CD4-positive, alpha-beta memory T cell (primary cell): ENCODE measurements at regions of chr3 and their contacts with region 1.

Region 1: DNA sequence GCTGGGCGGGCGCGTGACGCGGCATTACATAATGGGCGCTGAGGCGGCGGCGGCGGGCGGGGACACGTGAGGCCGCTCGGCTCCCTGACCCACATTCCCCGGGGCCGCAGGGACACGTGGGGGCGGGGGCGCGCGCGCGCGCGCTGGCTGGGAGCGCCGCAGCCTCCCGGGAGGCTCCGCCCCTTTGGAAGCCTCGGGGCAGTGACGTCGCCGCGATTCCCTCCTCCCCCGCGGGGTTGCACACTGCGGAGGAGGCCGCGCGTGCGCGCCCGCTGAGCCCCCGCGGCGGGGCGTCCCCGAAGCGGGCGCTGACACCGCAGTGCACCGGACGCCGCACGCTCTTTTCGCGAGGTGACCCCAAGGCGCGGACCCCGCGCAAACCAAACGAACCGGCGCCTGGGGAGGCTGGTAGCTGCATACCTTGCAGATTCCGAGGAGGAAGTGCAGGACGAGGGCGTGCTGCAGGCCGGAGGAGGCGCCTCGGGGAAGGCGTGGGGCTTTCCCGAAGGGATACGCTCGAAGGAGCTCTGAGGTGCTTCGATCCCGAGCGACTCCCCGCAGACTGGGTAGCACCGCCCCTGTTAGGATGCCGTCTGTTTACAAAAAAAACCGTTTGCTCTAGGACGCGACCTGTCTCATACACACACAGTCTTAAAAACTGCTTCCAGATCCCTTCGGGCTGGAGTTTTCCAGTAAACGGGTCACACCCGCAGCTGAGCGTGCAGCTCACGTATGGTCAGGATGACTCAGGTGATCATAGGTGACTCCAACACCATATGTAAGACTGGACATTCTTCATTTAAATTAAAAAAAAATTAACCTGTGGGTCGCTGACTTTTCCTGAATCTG is 1.0 kb downstream of the NR1D2 start:
- DNase-seq: peak; percentile 97 to 98 (median 98)
- H3K4me3 ChIP-seq: peak overlapping the region; percentile 83 to 86
- H3K4me3 Mint-ChIP-seq: peak overlapping the region; percentile 85 to 95 (median 88)
- H3K27ac ChIP-seq: peak overlapping the region; percentile 94
- H3K27ac Mint-ChIP-seq: peak overlapping the region; percentile 93 to 96 (median 95)
- H3K4me1 ChIP-seq: peaks cover 53% of the 10 kb centered on the region
- H3K4me1 Mint-ChIP-seq: peaks cover 38 to 61% (median 46%) of the 10 kb centered on the region in 4 donors
- H3K27me3 ChIP-seq: no peaks in the 10 kb centered on the region
- H3K27me3 Mint-ChIP-seq: no peaks in the 10 kb centered on the region

Region 2: GRCh38 chr3:23805633-23806533 is 140.2 kb before region 1 on chr3 and contains the start of gene UBE2E1:
- CTCF ChIA-PET with region 1: no interaction called
- POLR2A ChIA-PET with region 1: no interaction called
- intact Hi-C with region 1: loop called (anchors 2 kb)
- DNase-seq: peak; percentile 73 to 89 (median 78)
- H3K4me3 ChIP-seq: peak within 1 kb of the TSS; percentile 58 to 66
- H3K4me3 Mint-ChIP-seq: peak within 1 kb of the TSS; percentile 90 to 97 (median 95)
- H3K27ac ChIP-seq: peak within 1 kb of the TSS; percentile 52
- H3K27ac Mint-ChIP-seq: peak within 1 kb of the TSS; percentile 90 to 98 (median 93)
- H3K4me1 ChIP-seq: peaks cover 41% of the 10 kb centered on the region
- H3K4me1 Mint-ChIP-seq: peaks cover 35 to 48% (median 41%) of the 10 kb centered on the region in 4 donors
- H3K27me3 ChIP-seq: no peaks in the 10 kb centered on the region
- H3K27me3 Mint-ChIP-seq: no peaks in the 10 kb centered on the region
- total RNA-seq, gene UBE2E1: 59.5 to 61.4 TPM

Region 3: GRCh38 chr3:23916886-23917678 is 29.0 kb before region 1 on chr3 and contains the starts of genes NKIRAS1 and RPL15:
- CTCF ChIA-PET with region 1: interaction called, 9 read pairs
- POLR2A ChIA-PET with region 1: interaction called, 142 read pairs
- intact Hi-C with region 1: loop called (anchors 1 kb)
- DNase-seq: peak; percentile 97 to 98 (median 97)
- H3K4me3 ChIP-seq: peak within 1 kb of the TSS; percentile 89 to 90
- H3K4me3 Mint-ChIP-seq: peak within 1 kb of the TSS; percentile 98 to 99 (median 99)
- H3K27ac ChIP-seq: peak within 1 kb of the TSS; percentile 94
- H3K27ac Mint-ChIP-seq: peak within 1 kb of the TSS; percentile 92 to 100 (median 98)
- H3K4me1 ChIP-seq: peaks cover 37% of the 10 kb centered on the region
- H3K4me1 Mint-ChIP-seq: peaks cover 28 to 66% (median 40%) of the 10 kb centered on the region in 4 donors
- H3K27me3 ChIP-seq: no peaks in the 10 kb centered on the region
- H3K27me3 Mint-ChIP-seq: peaks cover 0 to 4% of the 10 kb centered on the region in 2 donors
- total RNA-seq, gene NKIRAS1: 5.2 to 5.3 TPM
- total RNA-seq, gene RPL15: 1,856 to 2,010 TPM

Region 4: DNA sequence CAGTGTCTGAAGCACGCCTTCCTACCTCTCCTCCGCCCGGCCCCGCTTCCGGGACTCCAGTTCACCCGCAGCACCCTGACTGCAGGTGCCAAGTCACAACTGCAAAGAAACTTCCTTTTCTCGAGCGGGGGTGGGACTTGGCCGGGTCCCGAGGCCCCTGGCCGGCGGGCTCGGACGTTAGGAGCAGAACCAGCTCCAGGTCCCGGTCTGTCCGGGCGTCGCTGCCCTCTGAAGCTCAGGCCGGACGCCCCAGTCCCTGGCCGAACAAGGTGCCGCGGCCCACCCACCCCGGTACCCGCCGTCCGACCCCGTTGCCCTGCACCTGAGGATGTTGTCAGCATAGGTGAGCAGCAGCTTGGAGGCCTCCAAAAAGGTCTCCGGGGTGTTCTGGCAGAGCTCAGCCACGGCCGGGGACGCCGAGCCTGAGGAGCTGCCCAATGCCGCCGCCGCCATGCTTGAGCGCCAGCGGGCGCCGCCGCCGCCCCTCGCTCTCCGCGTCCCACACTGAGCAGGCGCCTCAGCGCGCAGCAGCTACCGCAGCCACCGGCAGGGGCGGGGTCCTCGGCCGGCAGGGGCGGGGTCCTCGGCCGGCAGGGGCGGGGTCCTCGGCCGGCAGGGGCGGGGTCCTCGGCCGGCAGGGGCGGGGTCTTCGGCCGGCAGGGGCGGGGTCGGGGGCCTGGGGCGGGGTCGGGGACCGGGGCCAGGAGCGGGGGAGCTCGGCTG is 1837.0 kb after region 1 on chr3 and contains the start of gene NGLY1:
- CTCF ChIA-PET with region 1: no interaction called
- POLR2A ChIA-PET with region 1: no interaction called
- intact Hi-C with region 1: loop called (anchors 2 kb)
- DNase-seq: peak; percentile 84 to 87 (median 86)
- H3K4me3 ChIP-seq: peak within 1 kb of the TSS; percentile 32 to 69
- H3K4me3 Mint-ChIP-seq: peak within 1 kb of the TSS; percentile 88 to 97 (median 92)
- H3K27ac ChIP-seq: peak within 1 kb of the TSS; percentile 83
- H3K27ac Mint-ChIP-seq: peak within 1 kb of the TSS; percentile 89 to 95 (median 94)
- H3K4me1 ChIP-seq: peaks cover 41% of the 10 kb centered on the region
- H3K4me1 Mint-ChIP-seq: peaks cover 22 to 53% (median 36%) of the 10 kb centered on the region in 4 donors
- H3K27me3 ChIP-seq: no peaks in the 10 kb centered on the region
- H3K27me3 Mint-ChIP-seq: no peaks in the 10 kb centered on the region
- total RNA-seq, gene NGLY1: 71.3 to 74.3 TPM